A549 (cell line): ENCODE measurements at regions of chr14 and their contacts with region 1.

Region 1: GRCh38 chr14:24160850-24161804 is at the start of gene IRF9:
- DNase-seq: peak; percentile 95 to 96
- ATAC-seq: peak; percentile 79 to 94
- H3K4me3 ChIP-seq: peak within 1 kb of the TSS; percentile 47
- H3K27ac ChIP-seq: peak within 1 kb of the TSS; percentile 86 to 91
- H3K4me1 ChIP-seq: peaks cover 25% of the 10 kb centered on the region
- CTCF ChIP-seq: peak; percentile 92
- EP300 ChIP-seq: no peak
- POLR2A ChIP-seq: no peak
- RAD21 ChIP-seq: peak; percentile 72 to 78
- polyA plus RNA-seq, gene IRF9: 23.1 and 30.2 TPM in 2 replicates

Region 2: GRCh38 chr14:24058260-24058950 is 102.7 kb before region 1 on chr14:
- CTCF ChIA-PET with region 1: interaction called, 45 read pairs
- POLR2A ChIA-PET with region 1: interaction called, 6 read pairs
- DNase-seq: peak; percentile 71 to 78
- ATAC-seq: peak; percentile 88 to 94
- H3K4me3 ChIP-seq: no peak overlapping the region
- H3K27ac ChIP-seq: no peak overlapping the region
- H3K4me1 ChIP-seq: no peaks in the 10 kb centered on the region
- CTCF ChIP-seq: peak; percentile 78
- EP300 ChIP-seq: no peak
- POLR2A ChIP-seq: no peak
- RAD21 ChIP-seq: peak; percentile 85 to 95

Region 3: DNA sequence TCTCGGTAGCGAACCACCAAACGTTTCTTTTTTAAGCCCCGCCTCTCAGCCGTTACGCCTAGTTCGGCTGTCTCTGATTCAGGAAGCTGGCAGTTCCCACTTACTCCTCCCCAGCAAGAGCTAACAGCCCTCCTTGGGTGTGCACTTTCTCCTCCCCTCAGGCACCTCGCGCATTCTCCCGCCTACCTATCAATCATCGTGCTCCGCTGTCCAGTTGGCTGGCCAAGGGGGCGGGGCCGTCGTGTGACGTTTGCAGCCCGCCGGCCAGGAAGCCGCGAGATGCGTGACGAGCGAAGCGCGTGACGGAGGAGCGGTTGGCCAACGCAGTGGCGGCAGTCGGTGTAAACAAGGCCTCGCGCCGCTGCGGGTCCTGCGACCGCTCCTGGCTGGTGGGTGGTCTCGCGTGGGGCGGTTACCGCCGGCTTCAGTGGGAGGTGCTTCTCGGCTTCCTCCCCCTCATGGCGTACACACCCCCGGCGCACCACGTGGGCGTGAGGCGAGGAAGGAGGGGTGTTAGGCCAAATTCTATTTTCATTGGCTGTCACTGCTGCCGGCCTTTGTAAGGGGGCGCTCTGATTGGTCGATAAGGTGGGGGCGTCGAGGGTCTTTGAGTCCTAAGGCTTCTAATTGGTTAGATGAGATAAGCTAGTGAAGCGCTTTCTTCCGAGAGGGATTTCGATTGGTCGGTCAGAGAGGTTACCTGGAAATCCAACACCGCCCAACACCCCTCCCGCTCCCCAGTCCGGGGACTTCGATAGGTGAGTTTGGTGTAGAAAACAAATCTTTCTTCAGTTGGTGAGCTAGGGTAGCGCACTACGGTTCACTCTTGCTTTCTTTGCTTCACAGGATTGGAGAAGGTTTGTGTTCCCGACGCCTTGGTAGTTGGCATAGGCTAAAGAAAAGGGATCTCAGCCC is 46.3 kb before region 1 on chr14 and contains the starts of genes DCAF11 and NRL:
- CTCF ChIA-PET with region 1: interaction called, 47 read pairs
- POLR2A ChIA-PET with region 1: interaction called, 16 read pairs
- DNase-seq: peak; percentile 99 to 100
- ATAC-seq: peak; percentile 92 to 94
- H3K4me3 ChIP-seq: peak within 1 kb of the TSS; percentile 62
- H3K27ac ChIP-seq: peak within 1 kb of the TSS; percentile 95 to 96
- H3K4me1 ChIP-seq: peaks cover 11% of the 10 kb centered on the region; the same call in 1 of the 3 replicates
- CTCF ChIP-seq: no peak
- EP300 ChIP-seq: no peak
- POLR2A ChIP-seq: 0 out of 2 replicates have a peak, but pooled peaks have one; percentile 3
- RAD21 ChIP-seq: no peak
- polyA plus RNA-seq, gene DCAF11: 27.9 and 30.2 TPM in 2 replicates
- polyA plus RNA-seq, gene NRL: 0.86 and 0.97 TPM in 2 replicates

Region 4: DNA sequence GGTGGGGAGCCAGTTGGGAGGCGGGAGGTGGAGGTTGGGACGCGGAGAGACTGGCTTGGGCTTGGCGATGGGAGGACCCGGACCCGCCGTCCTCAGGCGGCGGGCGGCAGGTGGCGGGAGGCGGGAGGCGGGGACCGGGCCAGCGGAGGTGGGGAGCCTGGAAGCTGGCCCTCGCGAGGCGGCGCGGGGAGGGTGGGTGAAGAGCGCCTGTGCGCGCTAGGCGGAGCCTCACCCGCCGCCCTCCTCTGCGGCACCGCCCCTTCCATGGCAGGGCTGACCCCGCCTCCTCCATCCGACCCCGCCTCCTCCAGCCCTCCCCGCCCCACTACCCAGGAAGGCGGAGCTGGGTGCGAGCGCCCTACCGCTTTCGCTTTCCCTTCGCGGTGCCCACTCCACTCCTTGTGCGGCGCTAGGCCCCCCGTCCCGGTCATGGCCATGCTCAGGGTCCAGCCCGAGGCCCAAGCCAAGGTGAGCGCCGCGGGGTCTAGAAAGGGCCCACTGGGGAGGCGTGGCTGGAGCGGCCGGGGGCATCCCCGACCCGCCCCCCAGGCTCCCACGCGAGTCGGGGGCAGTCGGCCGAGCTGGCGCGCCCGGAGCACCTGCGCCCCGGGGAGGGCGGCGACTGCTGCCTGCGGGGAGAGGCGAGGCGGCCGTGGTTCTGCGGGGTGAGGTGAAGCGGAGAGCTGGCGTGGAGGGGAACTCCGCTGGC is 25.1 kb before region 1 on chr14 and contains the start of gene PSME1:
- CTCF ChIA-PET with region 1: interaction called, 168 read pairs
- POLR2A ChIA-PET with region 1: interaction called, 13 read pairs
- DNase-seq: peak; percentile 81 to 86
- ATAC-seq: peak; percentile 82 to 92
- H3K4me3 ChIP-seq: peak within 1 kb of the TSS; percentile 88
- H3K27ac ChIP-seq: peak within 1 kb of the TSS; percentile 96 to 98
- H3K4me1 ChIP-seq: peaks cover 32% of the 10 kb centered on the region
- CTCF ChIP-seq: no peak
- EP300 ChIP-seq: no peak
- POLR2A ChIP-seq: peak; percentile 41
- RAD21 ChIP-seq: no peak
- polyA plus RNA-seq, gene PSME1: 77.3 and 83.6 TPM in 2 replicates

Region 5: DNA sequence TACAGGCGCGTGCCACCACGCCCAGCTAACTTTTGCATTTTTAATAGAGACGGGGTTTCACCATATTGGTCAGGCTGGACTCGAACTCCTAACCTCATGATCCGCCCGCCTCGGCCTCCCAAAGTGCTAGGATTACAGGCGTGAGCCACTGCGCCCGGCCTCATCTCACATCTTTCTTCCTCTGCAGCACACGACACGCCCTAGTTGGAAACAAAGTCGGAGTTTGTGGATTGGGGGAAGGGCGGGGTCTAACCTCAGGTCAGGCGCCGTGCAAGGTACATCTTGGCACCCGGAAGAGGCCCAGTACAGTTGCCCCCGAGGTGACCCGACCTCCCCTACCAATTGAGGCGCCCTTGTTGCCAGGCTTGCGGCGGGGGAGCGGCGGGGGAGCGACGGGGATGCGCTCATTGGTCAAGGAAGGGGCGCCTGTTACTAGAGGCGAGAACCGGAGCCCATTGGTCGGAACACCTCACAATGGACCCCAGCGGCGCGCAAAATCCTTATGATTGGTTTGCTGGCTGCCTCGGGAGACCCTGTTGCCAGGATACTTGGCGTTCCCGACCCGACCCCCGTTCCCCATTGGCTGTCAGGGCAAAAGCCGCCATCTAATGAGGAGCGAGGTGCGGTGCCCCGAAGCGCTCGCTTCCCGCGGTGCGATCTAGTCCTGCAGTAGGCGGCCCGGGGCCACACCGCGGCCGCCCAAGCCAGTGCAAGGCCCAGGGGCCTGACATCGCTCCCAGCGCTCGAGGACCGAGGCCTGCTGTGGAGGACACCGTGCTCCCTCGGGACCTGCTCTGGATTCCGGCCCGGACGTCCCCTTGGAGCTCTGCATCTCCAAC is 10.5 kb after region 1 on chr14 and contains the start of gene REC8:
- CTCF ChIA-PET with region 1: interaction called, 14 read pairs
- POLR2A ChIA-PET with region 1: interaction called, 4 read pairs
- DNase-seq: no peak
- ATAC-seq: no peak
- H3K4me3 ChIP-seq: no peak within 1 kb of the TSS
- H3K27ac ChIP-seq: no peak within 1 kb of the TSS
- H3K4me1 ChIP-seq: no peaks in the 10 kb centered on the region
- CTCF ChIP-seq: no peak
- EP300 ChIP-seq: no peak
- POLR2A ChIP-seq: no peak
- RAD21 ChIP-seq: no peak
- polyA plus RNA-seq, gene REC8: 1.9 and 2.8 TPM in 2 replicates

Region 6: DNA sequence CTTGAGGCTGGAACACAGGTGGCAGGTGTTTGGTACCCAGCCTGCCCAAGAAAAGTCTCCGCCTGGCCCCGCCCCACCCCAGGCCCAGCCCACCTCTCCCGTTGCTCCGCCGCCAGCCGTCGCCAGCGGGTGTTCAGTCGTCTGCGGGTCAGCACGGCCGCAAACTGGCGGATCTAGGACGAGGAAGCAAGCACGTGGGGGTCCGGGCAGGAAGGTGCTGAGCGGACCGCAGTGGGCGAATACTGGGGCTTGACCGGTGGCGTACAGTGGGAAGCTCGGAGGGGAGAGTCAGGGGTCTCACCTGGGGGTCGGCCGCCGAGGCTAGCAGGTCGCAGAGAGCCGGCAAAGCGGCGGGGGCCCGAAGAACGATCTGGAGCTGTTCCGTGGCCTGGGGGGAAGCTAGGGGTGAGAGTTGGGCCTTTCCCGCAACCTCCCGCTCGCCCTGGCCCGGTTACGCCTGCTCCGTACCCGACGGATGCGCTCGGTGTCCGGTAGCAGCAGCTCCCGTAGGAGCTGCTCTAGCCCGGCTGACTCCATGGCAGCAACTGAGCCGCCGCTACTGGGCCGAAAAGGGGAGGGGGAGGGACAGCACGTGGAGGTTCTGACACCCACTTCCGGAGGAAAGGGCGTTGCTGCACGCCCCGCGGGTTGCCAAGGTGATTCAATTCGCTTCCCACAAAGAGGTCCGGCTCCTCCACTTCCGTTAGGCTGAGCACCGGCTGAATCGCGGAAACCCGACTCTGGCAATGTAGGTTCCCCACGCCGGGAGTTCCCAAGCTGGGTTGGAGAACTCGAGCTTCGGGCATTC is 27.3 kb after region 1 on chr14 and contains the start of gene IPO4:
- CTCF ChIA-PET with region 1: interaction called, 64 read pairs
- POLR2A ChIA-PET with region 1: no interaction called
- DNase-seq: peak; percentile 98 to 99
- ATAC-seq: peak; percentile 88 to 94
- H3K4me3 ChIP-seq: peak within 1 kb of the TSS; percentile 97
- H3K27ac ChIP-seq: peak within 1 kb of the TSS; percentile 96 to 98
- H3K4me1 ChIP-seq: peaks cover 16% of the 10 kb centered on the region
- CTCF ChIP-seq: no peak
- EP300 ChIP-seq: no peak
- POLR2A ChIP-seq: peak; percentile 81
- RAD21 ChIP-seq: no peak
- polyA plus RNA-seq, gene IPO4: 37.1 and 45.3 TPM in 2 replicates

Region 7: GRCh38 chr14:24241829-24242443 is 80.8 kb after region 1 on chr14:
- CTCF ChIA-PET with region 1: no interaction called
- POLR2A ChIA-PET with region 1: no interaction called
- DNase-seq: peak in 1 of 2 experiments; percentile 97
- ATAC-seq: peak; percentile 89 to 93
- H3K4me3 ChIP-seq: peak overlapping the region; percentile 64
- H3K27ac ChIP-seq: peak overlapping the region; percentile 89 to 99
- H3K4me1 ChIP-seq: peaks cover 11% of the 10 kb centered on the region
- CTCF ChIP-seq: no peak
- EP300 ChIP-seq: no peak
- POLR2A ChIP-seq: no peak
- RAD21 ChIP-seq: no peak